MCF 10A (cell line): ENCODE measurements at regions of chr2 and their contacts with region 1.

Region 1: GRCh38 chr2:151808258-151809072 is 19.8 kb downstream of the ARL5A start:
- DNase-seq: peak; percentile 38
- H3K4me3 Mint-ChIP-seq: no peak overlapping the region
- H3K27ac Mint-ChIP-seq: no peak overlapping the region
- H3K4me1 Mint-ChIP-seq: no peaks in the 10 kb centered on the region
- H3K27me3 Mint-ChIP-seq: no peaks in the 10 kb centered on the region
- CTCF ChIP-seq: peak; percentile 26

Region 2: GRCh38 chr2:151819920-151820319 is 11.5 kb after region 1 on chr2:
- CTCF ChIA-PET with region 1: interaction called, 18 read pairs
- POLR2A ChIA-PET with region 1: interaction called, 4 read pairs
- intact Hi-C with region 1: no loop called
- DNase-seq: no peak
- H3K4me3 Mint-ChIP-seq: no peak overlapping the region
- H3K27ac Mint-ChIP-seq: no peak overlapping the region
- H3K4me1 Mint-ChIP-seq: peaks cover 18% of the 10 kb centered on the region
- H3K27me3 Mint-ChIP-seq: no peaks in the 10 kb centered on the region
- CTCF ChIP-seq: no peak